T-cell (primary cell): ENCODE measurements at regions of chr10 and their contacts with region 1.

Region 1: GRCh38 chr10:8275911-8276310 is 221.4 kb downstream of the GATA3 start:
- DNase-seq: no peak
- ATAC-seq: no peak
- H3K4me3 ChIP-seq: no peak overlapping the region
- H3K4me3 Mint-ChIP-seq: no peak overlapping the region
- H3K27ac ChIP-seq: no peak overlapping the region
- H3K27ac Mint-ChIP-seq: no peak overlapping the region
- H3K4me1 ChIP-seq: no peaks in the 10 kb centered on the region
- H3K4me1 Mint-ChIP-seq: no peaks in the 10 kb centered on the region
- H3K27me3 ChIP-seq: no peaks in the 10 kb centered on the region
- H3K27me3 Mint-ChIP-seq: no peaks in the 10 kb centered on the region

Region 2: DNA sequence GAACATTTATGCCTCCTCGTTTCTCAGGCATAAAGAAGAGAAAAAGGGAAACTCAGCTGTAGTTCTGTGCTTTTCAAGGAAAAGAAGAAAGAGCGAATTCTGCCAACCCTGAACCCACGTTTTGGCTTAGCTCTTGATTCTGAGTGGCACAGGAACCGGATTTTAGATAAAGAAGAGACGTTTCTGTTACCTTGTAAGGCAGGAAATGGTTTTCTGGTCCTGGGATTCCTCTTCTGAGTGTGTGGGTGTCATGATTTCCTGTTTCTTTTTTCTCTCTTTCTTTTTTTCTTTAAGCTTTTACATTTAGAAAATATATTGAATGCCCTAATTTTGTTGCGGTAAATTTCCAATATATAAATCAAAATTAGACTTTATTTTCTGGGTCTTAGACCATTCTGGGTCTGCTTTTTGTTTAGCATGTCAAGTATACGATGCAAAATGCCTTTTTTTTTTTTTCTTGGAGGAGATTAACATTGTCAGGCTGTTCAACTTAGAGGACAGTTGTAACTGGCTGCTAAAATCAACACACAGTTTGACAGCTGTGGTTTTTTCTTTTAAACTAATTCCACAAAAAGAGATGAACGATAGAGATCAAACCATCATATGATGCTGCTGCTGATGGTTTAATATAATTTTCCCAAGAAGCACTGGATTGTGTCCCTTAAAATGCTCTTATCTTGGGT is 30.6 kb before region 1 on chr10:
- CTCF ChIA-PET with region 1: no interaction called
- POLR2A ChIA-PET with region 1: interaction called in 1 of 2 experiments, 14 read pairs
- DNase-seq: peak in 6 of 35 experiments; percentile 13 to 71 (median 21)
- ATAC-seq: peak; percentile 90 to 97 (median 96)
- H3K4me3 ChIP-seq: peak overlapping the region; percentile 1 to 4
- H3K4me3 Mint-ChIP-seq: peak overlapping the region; percentile 59 to 71 (median 61)
- H3K27ac ChIP-seq: peak overlapping the region; percentile 80
- H3K27ac Mint-ChIP-seq: peak overlapping the region; percentile 88 to 93
- H3K4me1 ChIP-seq: peaks cover 34 to 35% of the 10 kb centered on the region in 2 experiments
- H3K4me1 Mint-ChIP-seq: peaks cover 38 to 57% (median 51%) of the 10 kb centered on the region in 3 donors
- H3K27me3 ChIP-seq: no peaks in the 10 kb centered on the region
- H3K27me3 Mint-ChIP-seq: no peaks in the 10 kb centered on the region

Region 3: DNA sequence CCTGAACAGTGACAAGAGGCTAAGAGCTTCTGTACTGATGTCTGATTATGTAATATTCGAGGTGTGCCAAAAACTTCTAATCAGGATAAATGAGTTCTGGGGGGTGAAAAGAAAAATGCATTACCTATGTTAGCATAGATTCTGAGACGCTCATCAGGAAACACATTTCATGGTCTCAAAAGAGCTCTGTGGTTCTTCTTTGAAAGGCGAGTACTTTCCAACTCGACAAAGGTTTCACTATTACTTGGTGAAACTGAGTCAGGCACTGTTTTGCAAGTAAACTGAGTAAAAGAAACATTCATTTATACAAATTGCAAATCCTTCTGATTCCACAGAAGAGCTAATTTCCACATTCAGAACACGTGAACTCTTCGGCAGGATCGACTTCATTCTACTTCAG is 301.8 kb after region 1 on chr10:
- CTCF ChIA-PET with region 1: no interaction called
- POLR2A ChIA-PET with region 1: no interaction called
- DNase-seq: no peak
- ATAC-seq: no peak
- H3K4me3 ChIP-seq: no peak overlapping the region
- H3K4me3 Mint-ChIP-seq: no peak overlapping the region
- H3K27ac ChIP-seq: no peak overlapping the region
- H3K27ac Mint-ChIP-seq: no peak overlapping the region
- H3K4me1 ChIP-seq: no peaks in the 10 kb centered on the region
- H3K4me1 Mint-ChIP-seq: peaks cover 0 to 1% (median 1%) of the 10 kb centered on the region in 3 donors
- H3K27me3 ChIP-seq: peaks cover 0 to 2% of the 10 kb centered on the region in 2 experiments
- H3K27me3 Mint-ChIP-seq: peaks cover 12 to 41% of the 10 kb centered on the region in 2 donors

Region 4: DNA sequence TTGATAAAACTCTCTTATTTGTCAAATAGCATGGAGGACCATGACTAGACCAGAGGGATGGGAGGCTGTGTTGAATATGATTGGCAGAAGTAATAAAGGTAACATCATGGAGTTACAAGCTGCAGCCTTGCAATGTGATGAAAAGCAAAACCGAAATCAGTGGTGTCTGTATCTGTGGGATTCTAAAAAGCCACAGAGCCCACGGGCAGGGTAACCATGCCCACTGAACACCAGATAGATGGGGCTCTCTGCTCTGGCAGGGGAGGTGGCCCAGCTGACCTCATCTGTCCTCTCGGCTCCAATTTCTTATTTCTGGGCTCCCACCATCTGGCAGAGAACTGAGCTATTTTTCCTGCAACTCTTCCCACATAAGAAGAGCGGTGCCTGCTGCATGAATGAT is 850.8 kb after region 1 on chr10:
- CTCF ChIA-PET with region 1: no interaction called
- POLR2A ChIA-PET with region 1: interaction called in 1 of 2 experiments, 10 read pairs
- DNase-seq: no peak
- ATAC-seq: no peak
- H3K4me3 ChIP-seq: no peak overlapping the region
- H3K4me3 Mint-ChIP-seq: no peak overlapping the region
- H3K27ac ChIP-seq: no peak overlapping the region
- H3K27ac Mint-ChIP-seq: no peak overlapping the region
- H3K4me1 ChIP-seq: no peaks in the 10 kb centered on the region
- H3K4me1 Mint-ChIP-seq: no peaks in the 10 kb centered on the region
- H3K27me3 ChIP-seq: no peaks in the 10 kb centered on the region
- H3K27me3 Mint-ChIP-seq: peaks cover 0 to 2% of the 10 kb centered on the region in 2 donors